Activated CD8-positive, alpha-beta memory T cell treated with anti-CD3 and anti-CD28 coated beads, Interleukin-2, amount 10 ng/mL, durations not matched to agents 7 days and 5 days (primary cell): ENCODE measurements at regions of chr3 and their contacts with region 1.

Region 1: DNA sequence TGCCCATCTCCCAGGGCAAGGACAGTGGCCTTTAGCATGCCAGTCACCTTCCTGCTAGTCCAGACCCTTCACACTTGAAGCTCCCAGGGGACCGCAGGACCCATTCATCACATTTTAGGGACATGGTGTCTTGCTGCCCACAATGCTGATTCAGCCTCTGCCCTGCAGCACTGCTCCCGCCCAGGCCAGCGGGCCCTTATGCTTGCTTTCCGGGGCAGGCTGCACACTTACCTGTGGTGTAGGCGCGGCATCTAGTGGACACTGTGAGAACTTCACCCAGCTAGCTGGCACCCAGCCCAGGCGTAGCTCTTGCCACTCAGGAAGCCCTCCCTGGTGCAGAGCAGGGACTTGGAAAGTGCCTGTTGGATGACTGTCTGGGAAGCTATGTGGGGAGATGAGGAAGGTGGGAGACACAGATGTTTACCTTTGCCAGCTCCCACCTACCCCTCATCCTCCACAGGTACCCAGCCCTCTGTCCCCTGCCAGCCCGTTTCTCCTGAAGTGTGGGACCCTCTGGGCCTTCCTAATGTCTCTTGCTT is 26.2 kb upstream of the NR2C2 start:
- DNase-seq: peak; percentile 85
- ATAC-seq: peak; percentile 92
- H3K4me3 Mint-ChIP-seq: no peak overlapping the region
- H3K27ac Mint-ChIP-seq: no peak overlapping the region
- H3K4me1 Mint-ChIP-seq: no peaks in the 10 kb centered on the region
- H3K27me3 Mint-ChIP-seq: peaks cover 7% of the 10 kb centered on the region

Region 2: GRCh38 chr3:14725013-14725412 is 196.1 kb before region 1 on chr3:
- CTCF ChIA-PET with region 1: no interaction called
- DNase-seq: no peak
- ATAC-seq: no peak
- H3K4me3 Mint-ChIP-seq: no peak overlapping the region
- H3K27ac Mint-ChIP-seq: no peak overlapping the region
- H3K4me1 Mint-ChIP-seq: no peaks in the 10 kb centered on the region
- H3K27me3 Mint-ChIP-seq: no peaks in the 10 kb centered on the region

Region 3: GRCh38 chr3:14791343-14791945 is 129.7 kb before region 1 on chr3:
- CTCF ChIA-PET with region 1: interaction called, 37 read pairs
- DNase-seq: peak; percentile 69
- ATAC-seq: peak; percentile 76
- H3K4me3 Mint-ChIP-seq: no peak overlapping the region
- H3K27ac Mint-ChIP-seq: no peak overlapping the region
- H3K4me1 Mint-ChIP-seq: no peaks in the 10 kb centered on the region
- H3K27me3 Mint-ChIP-seq: peaks cover 30% of the 10 kb centered on the region

Region 4: GRCh38 chr3:14947100-14947885 is 26.1 kb after region 1 on chr3 and contains the start of gene NR2C2:
- CTCF ChIA-PET with region 1: interaction called, 11 read pairs
- DNase-seq: peak; percentile 92
- ATAC-seq: peak; percentile 73
- H3K4me3 Mint-ChIP-seq: peak within 1 kb of the TSS; percentile 98
- H3K27ac Mint-ChIP-seq: peak within 1 kb of the TSS; percentile 100
- H3K4me1 Mint-ChIP-seq: peaks cover 52% of the 10 kb centered on the region
- H3K27me3 Mint-ChIP-seq: no peaks in the 10 kb centered on the region
- total RNA-seq, gene NR2C2: 56.5 to 69.7 TPM